ENCODE measurements at regions of chr19 and their contacts with region 1.

Region 1: GRCh38 chr19:45643024-45643926 is 4.1 kb upstream of the EML2 start:
- DNase-seq: peak; percentile 91 to 95
- H3K4me3 ChIP-seq: peak overlapping the region; percentile 41
- H3K4me3 Mint-ChIP-seq: peak overlapping the region; percentile 70
- H3K27ac Mint-ChIP-seq: no peak overlapping the region
- H3K4me1 ChIP-seq: peaks cover 20% of the 10 kb centered on the region
- H3K4me1 Mint-ChIP-seq: peaks cover 25% of the 10 kb centered on the region
- H3K27me3 ChIP-seq: no peaks in the 10 kb centered on the region
- H3K27me3 Mint-ChIP-seq: no peaks in the 10 kb centered on the region
- CTCF ChIP-seq: peak; percentile 99

Region 2: GRCh38 chr19:45523642-45524256 is 119.5 kb before region 1 on chr19:
- CTCF ChIA-PET with region 1: interaction called, 27 read pairs
- POLR2A ChIA-PET with region 1: no interaction called
- intact Hi-C with region 1: loop called (anchors 1 kb)
- DNase-seq: peak; percentile 82 to 91
- H3K4me3 ChIP-seq: no peak overlapping the region
- H3K4me3 Mint-ChIP-seq: no peak overlapping the region
- H3K27ac Mint-ChIP-seq: no peak overlapping the region
- H3K4me1 ChIP-seq: peaks cover 15% of the 10 kb centered on the region
- H3K4me1 Mint-ChIP-seq: peaks cover 10% of the 10 kb centered on the region
- H3K27me3 ChIP-seq: no peaks in the 10 kb centered on the region
- H3K27me3 Mint-ChIP-seq: no peaks in the 10 kb centered on the region
- CTCF ChIP-seq: peak; percentile 73 to 94

Region 3: GRCh38 chr19:45584332-45585157 is 58.7 kb before region 1 on chr19 and contains the start of gene OPA3:
- CTCF ChIA-PET with region 1: interaction called, 33 read pairs
- POLR2A ChIA-PET with region 1: interaction called, 9 read pairs
- intact Hi-C with region 1: no loop called
- DNase-seq: peak; percentile 99 to 100
- H3K4me3 ChIP-seq: peak within 1 kb of the TSS; percentile 91
- H3K4me3 Mint-ChIP-seq: peak within 1 kb of the TSS; percentile 89
- H3K27ac Mint-ChIP-seq: peak within 1 kb of the TSS; percentile 96
- H3K4me1 ChIP-seq: peaks cover 9% of the 10 kb centered on the region
- H3K4me1 Mint-ChIP-seq: peaks cover 10% of the 10 kb centered on the region
- H3K27me3 ChIP-seq: no peaks in the 10 kb centered on the region
- H3K27me3 Mint-ChIP-seq: peaks cover under 1% of the 10 kb centered on the region
- CTCF ChIP-seq: peak in 1 of 2 experiments; percentile 15
- total RNA-seq, gene OPA3: 16.9 and 17.7 TPM in 2 replicates

Region 4: GRCh38 chr19:45615795-45616708 is 27.2 kb before region 1 on chr19:
- CTCF ChIA-PET with region 1: interaction called, 27 read pairs
- POLR2A ChIA-PET with region 1: interaction called, 9 read pairs
- intact Hi-C with region 1: no loop called
- DNase-seq: peak; percentile 78 to 86
- H3K4me3 ChIP-seq: no peak overlapping the region
- H3K4me3 Mint-ChIP-seq: no peak overlapping the region
- H3K27ac Mint-ChIP-seq: no peak overlapping the region
- H3K4me1 ChIP-seq: 0 out of 2 replicates have a peak, but pooled peaks cover 10% of the 10 kb centered on the region
- H3K4me1 Mint-ChIP-seq: peaks cover 9% of the 10 kb centered on the region
- H3K27me3 ChIP-seq: no peaks in the 10 kb centered on the region
- H3K27me3 Mint-ChIP-seq: no peaks in the 10 kb centered on the region
- CTCF ChIP-seq: no peak

Region 5: GRCh38 chr19:45670670-45671453 is 27.6 kb after region 1 on chr19:
- CTCF ChIA-PET with region 1: interaction called, 10 read pairs
- POLR2A ChIA-PET with region 1: interaction called, 7 read pairs
- intact Hi-C with region 1: no loop called
- DNase-seq: peak; percentile 74 to 80
- H3K4me3 ChIP-seq: no peak overlapping the region
- H3K4me3 Mint-ChIP-seq: peak overlapping the region; percentile 85
- H3K27ac Mint-ChIP-seq: peak overlapping the region; percentile 19
- H3K4me1 ChIP-seq: no peaks in the 10 kb centered on the region
- H3K4me1 Mint-ChIP-seq: peaks cover 8% of the 10 kb centered on the region
- H3K27me3 ChIP-seq: no peaks in the 10 kb centered on the region
- H3K27me3 Mint-ChIP-seq: no peaks in the 10 kb centered on the region
- CTCF ChIP-seq: no peak

Region 6: GRCh38 chr19:45705115-45705514 is 61.8 kb after region 1 on chr19:
- CTCF ChIA-PET with region 1: no interaction called
- POLR2A ChIA-PET with region 1: no interaction called
- intact Hi-C with region 1: no loop called
- DNase-seq: no peak
- H3K4me3 ChIP-seq: no peak overlapping the region
- H3K4me3 Mint-ChIP-seq: no peak overlapping the region
- H3K27ac Mint-ChIP-seq: no peak overlapping the region
- H3K4me1 ChIP-seq: no peaks in the 10 kb centered on the region
- H3K4me1 Mint-ChIP-seq: peaks cover 6% of the 10 kb centered on the region
- H3K27me3 ChIP-seq: no peaks in the 10 kb centered on the region
- H3K27me3 Mint-ChIP-seq: no peaks in the 10 kb centered on the region
- CTCF ChIP-seq: no peak

Region 7: GRCh38 chr19:45770192-45771101 is 127.2 kb after region 1 on chr19:
- CTCF ChIA-PET with region 1: interaction called, 11 read pairs
- POLR2A ChIA-PET with region 1: no interaction called
- intact Hi-C with region 1: no loop called
- DNase-seq: peak; percentile 99
- H3K4me3 ChIP-seq: peak overlapping the region; percentile 76
- H3K4me3 Mint-ChIP-seq: peak overlapping the region; percentile 97
- H3K27ac Mint-ChIP-seq: peak overlapping the region; percentile 96
- H3K4me1 ChIP-seq: peaks cover 6% of the 10 kb centered on the region
- H3K4me1 Mint-ChIP-seq: peaks cover 7% of the 10 kb centered on the region
- H3K27me3 ChIP-seq: no peaks in the 10 kb centered on the region
- H3K27me3 Mint-ChIP-seq: no peaks in the 10 kb centered on the region
- CTCF ChIP-seq: peak; percentile 95 to 98